ENCODE measurements at regions of chr1 and their contacts with region 1.

Region 1: GRCh38 chr1:81165963-81166362 is 634.8 kb upstream of the ADGRL2 start:
- DNase-seq: no peak
- H3K4me3 ChIP-seq: no peak overlapping the region
- H3K27ac ChIP-seq: no peak overlapping the region
- H3K4me1 ChIP-seq: no peaks in the 10 kb centered on the region
- H3K27me3 ChIP-seq: no peaks in the 10 kb centered on the region
- CTCF ChIP-seq: no peak
- EP300 ChIP-seq: no peak
- POLR2A ChIP-seq: no peak

Region 2: GRCh38 chr1:83086346-83086745 is 1920.4 kb after region 1 on chr1:
- in situ Hi-C with region 1: no loop called
- intact Hi-C with region 1: loop called (anchors 5 kb)
- DNase-seq: no peak
- H3K4me3 ChIP-seq: no peak overlapping the region
- H3K27ac ChIP-seq: no peak overlapping the region
- H3K4me1 ChIP-seq: no peaks in the 10 kb centered on the region
- H3K27me3 ChIP-seq: no peaks in the 10 kb centered on the region
- CTCF ChIP-seq: no peak
- EP300 ChIP-seq: no peak
- POLR2A ChIP-seq: no peak